ENCODE measurements at regions of chr12 and their contacts with region 1.

Region 1: DNA sequence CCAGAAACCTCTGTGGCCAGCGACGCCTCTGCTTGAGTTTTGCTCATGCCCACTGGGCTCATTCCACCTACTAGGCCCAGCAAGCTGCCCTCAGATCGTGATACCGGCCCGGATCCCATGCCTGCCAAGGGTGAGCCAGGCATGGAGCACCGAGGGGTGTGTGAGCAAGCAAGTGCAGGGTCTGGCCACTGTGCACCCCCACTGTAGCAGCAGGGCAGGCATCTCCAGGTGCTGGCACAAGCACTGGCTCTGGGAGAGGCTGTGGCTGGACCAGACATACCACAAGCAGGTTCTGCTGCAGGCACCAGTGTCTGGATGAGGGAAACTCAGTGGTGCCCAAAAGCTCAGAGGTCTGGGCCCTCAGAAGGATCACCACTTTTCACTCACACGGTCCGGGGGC is 20.6 kb downstream of the FAM186A start:
- DNase-seq: no peak
- ATAC-seq: peak; percentile 64
- H3K4me3 ChIP-seq: no peak overlapping the region
- H3K27ac ChIP-seq: no peak overlapping the region
- H3K4me1 ChIP-seq: no peaks in the 10 kb centered on the region
- H3K27me3 ChIP-seq: no peaks in the 10 kb centered on the region
- CTCF ChIP-seq: no peak
- EP300 ChIP-seq: no peak
- POLR2A ChIP-seq: no peak
- RAD21 ChIP-seq: no peak

Region 2: GRCh38 chr12:50354908-50355307 is 20.9 kb before region 1 on chr12:
- CTCF ChIA-PET with region 1: no interaction called
- POLR2A ChIA-PET with region 1: no interaction called
- in situ Hi-C with region 1: no loop called
- intact Hi-C with region 1: loop called (anchors 1 kb)
- DNase-seq: no peak
- ATAC-seq: no peak
- H3K4me3 ChIP-seq: no peak overlapping the region
- H3K27ac ChIP-seq: no peak overlapping the region
- H3K4me1 ChIP-seq: peaks cover 26% of the 10 kb centered on the region
- H3K27me3 ChIP-seq: no peaks in the 10 kb centered on the region
- CTCF ChIP-seq: no peak
- EP300 ChIP-seq: no peak
- POLR2A ChIP-seq: no peak
- RAD21 ChIP-seq: no peak

Measured in HepG2 (cell line).